Activated CD8-positive, alpha-beta T cell treated with anti-CD3 and anti-CD28 coated beads for 36 hours (primary cell): ENCODE measurements at regions of chr14 and their contacts with region 1.

Region 1: DNA sequence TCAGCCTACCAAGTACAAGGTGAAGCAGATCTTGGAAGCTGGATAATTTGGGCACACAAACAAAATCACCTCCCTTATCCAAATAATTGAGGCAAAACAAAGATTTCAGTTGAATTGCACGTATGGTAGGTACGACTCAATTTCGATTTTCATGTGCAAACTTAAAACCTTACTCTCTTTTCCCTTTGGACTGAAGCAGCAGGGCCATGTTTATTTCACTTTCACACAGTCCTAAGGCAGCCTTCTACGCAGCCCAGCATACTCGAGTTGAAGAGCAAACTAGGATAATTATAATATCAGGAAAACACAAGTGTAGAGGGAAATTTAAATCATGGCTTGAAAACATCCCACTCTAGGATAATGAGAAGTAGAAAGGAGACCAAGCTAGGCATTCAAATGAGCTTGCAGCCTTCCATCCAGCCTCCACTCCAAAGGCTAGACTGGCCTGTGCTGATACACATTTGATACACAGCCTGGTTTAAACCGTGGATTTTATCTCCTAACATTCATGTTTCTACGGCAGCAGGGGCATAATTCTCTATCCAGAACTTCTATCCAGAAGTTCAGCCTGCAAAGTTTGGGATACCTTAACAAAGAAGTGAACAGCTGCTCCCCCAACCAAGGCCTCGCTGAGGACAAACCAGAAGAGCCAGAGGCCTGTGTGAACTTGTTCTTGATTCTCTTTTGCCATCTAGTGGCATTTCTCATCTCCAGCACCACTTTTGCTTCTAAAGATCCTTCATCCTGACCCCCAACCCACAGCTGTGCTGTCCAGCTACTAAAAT is 2.4 kb upstream of the RNASE7 start:
- DNase-seq: peak; percentile 26
- ATAC-seq: peak; percentile 86
- H3K4me3 Mint-ChIP-seq: no peak overlapping the region
- H3K27ac Mint-ChIP-seq: no peak overlapping the region
- H3K4me1 Mint-ChIP-seq: peaks cover 4% of the 10 kb centered on the region
- H3K27me3 Mint-ChIP-seq: peaks cover 3% of the 10 kb centered on the region
- CTCF ChIP-seq: peak; percentile 50

Region 2: DNA sequence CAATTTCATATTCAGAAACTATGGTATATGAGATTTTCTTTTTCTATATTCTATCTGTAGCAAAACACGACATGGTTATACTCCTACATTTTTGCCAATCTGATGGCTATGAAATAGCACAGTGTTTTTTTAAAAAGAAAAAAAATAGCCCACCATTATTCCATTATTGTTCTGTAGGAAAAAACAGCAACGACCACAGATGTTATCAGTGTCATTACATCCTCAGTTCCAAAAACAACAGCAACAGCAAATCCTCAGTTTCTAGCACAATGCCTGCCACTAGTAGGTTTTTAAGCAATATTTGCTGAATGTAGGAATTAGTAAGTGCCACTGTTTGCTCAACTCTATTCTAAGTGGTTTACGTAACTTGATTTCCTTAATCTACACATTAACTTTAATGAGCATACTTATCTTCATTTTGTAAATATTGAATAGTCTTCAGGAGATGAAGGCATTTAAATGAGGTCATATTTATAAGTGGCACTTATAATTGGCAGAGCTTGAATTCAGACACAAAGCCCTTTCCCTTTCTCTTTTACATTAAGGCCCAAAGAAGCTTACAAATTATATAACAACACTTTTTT is 250.5 kb before region 1 on chr14:
- CTCF ChIA-PET with region 1: no interaction called
- POLR2A ChIA-PET with region 1: no interaction called
- intact Hi-C with region 1: no loop called
- DNase-seq: no peak
- ATAC-seq: no peak
- H3K4me3 Mint-ChIP-seq: no peak overlapping the region
- H3K27ac Mint-ChIP-seq: no peak overlapping the region
- H3K4me1 Mint-ChIP-seq: no peaks in the 10 kb centered on the region
- H3K27me3 Mint-ChIP-seq: no peaks in the 10 kb centered on the region
- CTCF ChIP-seq: no peak

Region 3: DNA sequence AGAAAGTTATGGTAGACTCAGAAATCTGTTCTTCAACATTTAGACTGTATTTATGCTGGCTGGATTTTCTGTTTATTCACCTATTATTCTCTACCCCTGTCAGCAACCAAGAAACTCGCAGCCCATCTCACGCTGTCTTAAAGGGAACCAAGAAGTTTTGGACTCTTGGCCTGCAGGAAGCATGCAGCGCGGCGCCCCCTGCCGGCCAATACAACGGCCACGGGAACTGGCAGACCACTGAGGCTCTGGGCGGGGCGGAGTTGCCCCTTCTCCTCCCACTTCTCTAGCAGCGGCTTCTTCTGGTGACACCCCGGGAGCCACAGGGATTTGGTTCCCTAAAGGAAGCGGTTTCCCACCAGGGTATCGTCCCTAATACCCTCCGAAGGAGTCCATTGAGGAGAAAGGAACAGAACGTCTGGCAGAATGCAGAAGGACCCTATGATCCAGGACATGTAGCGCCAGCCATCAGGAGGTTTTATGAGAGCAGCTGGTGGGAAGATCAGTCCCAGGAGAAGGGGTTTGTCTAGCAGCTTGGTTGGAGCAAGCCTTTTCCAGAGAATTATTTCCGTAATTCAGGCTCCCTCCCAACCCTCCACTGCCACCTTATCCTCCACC is 105.5 kb before region 1 on chr14:
- CTCF ChIA-PET with region 1: no interaction called
- POLR2A ChIA-PET with region 1: no interaction called
- intact Hi-C with region 1: no loop called
- DNase-seq: peak; percentile 65
- ATAC-seq: no peak
- H3K4me3 Mint-ChIP-seq: no peak overlapping the region
- H3K27ac Mint-ChIP-seq: no peak overlapping the region
- H3K4me1 Mint-ChIP-seq: no peaks in the 10 kb centered on the region
- H3K27me3 Mint-ChIP-seq: peaks cover 2% of the 10 kb centered on the region
- CTCF ChIP-seq: peak; percentile 76

Region 4: DNA sequence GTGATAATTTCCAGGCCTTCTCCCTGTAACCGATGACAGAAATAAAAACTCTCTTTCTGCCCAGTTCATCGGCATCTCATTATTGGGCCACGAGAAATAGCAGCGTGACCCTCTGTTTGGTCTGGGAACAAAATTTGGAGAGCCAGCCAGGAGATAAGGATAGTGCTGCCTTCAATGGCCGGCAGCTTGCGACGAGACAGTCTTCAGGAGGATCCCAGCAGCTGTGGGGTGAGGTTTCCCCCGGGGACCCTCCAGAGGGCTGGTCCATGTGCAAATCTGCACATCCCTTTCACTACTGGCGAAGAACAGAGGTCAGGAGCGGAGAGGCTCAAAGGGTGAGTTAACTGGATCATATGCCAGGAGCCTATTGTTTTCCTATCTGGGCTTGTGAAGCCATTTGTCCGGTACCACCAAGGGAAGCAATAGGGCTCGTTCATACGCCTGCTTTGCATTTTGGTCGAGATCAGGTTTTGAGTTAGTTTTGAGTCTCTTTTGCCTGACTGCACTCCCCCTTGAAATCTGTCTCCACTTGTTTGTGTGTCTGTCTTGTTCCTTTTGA is 35.9 kb before region 1 on chr14:
- CTCF ChIA-PET with region 1: interaction called, 15 read pairs
- POLR2A ChIA-PET with region 1: no interaction called
- intact Hi-C with region 1: no loop called
- DNase-seq: no peak
- ATAC-seq: no peak
- H3K4me3 Mint-ChIP-seq: no peak overlapping the region
- H3K27ac Mint-ChIP-seq: no peak overlapping the region
- H3K4me1 Mint-ChIP-seq: no peaks in the 10 kb centered on the region
- H3K27me3 Mint-ChIP-seq: no peaks in the 10 kb centered on the region
- CTCF ChIP-seq: no peak

Region 5: DNA sequence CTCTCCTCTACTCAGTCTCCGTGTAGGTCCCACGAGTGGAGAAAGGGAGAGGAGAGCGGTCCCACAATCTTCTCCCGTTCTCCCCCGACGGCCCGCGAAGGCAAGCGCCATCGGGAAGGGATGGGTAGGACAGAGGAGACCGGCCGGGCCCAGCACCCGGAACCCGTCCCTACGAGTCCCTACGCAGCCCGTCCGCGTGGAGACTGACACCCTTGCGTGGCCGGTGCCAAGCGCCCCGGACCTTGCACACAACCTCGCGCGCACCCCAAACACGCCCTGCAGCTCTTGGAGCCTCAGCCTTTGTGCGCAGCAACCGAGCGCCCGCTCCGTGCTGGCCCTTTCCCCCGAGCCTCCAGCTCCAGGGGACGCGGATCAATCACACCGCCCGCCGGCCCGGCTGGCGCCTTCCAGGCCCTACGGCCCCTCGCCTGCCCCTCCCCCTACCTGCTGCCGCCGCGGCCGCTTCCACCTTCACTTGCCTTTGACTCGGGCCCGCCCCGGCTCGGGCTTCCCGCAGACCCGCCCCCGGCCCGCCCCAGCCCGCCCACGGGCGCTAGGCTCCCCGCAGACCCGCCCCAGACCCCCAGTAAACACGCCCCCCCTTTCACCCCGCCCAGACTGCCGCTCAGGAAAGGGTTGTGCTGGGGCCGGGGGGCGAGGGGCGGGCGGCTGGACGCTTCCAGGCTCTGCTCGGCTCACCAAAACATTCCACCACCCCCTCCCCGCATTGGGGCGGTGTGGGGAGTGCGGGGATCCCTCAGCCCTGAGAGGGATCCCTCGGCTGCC is 15.0 kb before region 1 on chr14 and contains the start of gene NDRG2:
- CTCF ChIA-PET with region 1: interaction called, 218 read pairs
- POLR2A ChIA-PET with region 1: no interaction called
- intact Hi-C with region 1: no loop called
- DNase-seq: peak; percentile 73
- ATAC-seq: peak; percentile 77
- H3K4me3 Mint-ChIP-seq: peak within 1 kb of the TSS; percentile 78
- H3K27ac Mint-ChIP-seq: peak within 1 kb of the TSS; percentile 41
- H3K4me1 Mint-ChIP-seq: peaks cover 12% of the 10 kb centered on the region
- H3K27me3 Mint-ChIP-seq: peaks cover 2% of the 10 kb centered on the region
- CTCF ChIP-seq: no peak
- total RNA-seq, gene NDRG2: 4.3 to 5.3 TPM

Region 6: DNA sequence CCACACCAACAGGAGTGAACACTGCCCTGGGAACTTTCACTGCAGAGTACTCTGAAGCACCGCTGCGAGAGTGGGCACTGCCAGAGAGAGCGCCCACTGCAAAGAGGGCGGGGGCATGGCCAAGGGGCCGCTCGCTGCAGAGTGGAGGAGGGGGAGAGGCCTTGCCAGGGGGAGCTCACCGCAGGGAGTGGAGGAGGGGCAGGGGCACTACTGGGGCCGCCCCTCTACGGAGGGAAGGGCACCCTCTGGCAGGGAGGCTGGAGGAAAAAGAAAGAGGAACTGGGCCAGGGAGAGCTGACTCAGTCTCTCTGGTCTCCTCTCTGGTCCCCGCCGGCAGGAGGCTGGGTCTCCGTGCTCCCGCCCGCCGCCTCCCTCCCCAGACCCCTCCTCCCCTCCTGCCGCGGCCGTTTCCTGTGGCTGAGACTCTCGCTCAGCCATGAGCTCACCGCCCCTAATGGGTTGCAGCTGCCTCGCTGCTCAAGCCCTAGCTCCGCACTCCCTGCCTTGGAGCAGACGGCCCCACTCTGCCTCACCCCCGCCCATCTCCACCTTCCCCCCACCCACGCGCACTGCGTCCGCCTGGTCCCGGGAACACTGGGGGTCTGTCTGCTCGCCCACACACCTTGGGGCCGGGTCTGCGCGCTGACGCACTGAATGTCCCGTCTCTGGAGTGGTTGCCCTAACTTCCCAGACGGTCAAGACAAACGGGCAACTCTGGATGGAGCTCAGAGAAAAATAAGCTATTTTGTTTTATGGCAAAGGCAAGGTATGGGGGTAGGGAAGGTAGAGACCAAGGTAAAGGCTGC is 31.7 kb after region 1 on chr14:
- CTCF ChIA-PET with region 1: interaction called, 11 read pairs
- POLR2A ChIA-PET with region 1: no interaction called
- intact Hi-C with region 1: no loop called
- DNase-seq: peak; percentile 76
- ATAC-seq: peak; percentile 76
- H3K4me3 Mint-ChIP-seq: peak overlapping the region; percentile 69
- H3K27ac Mint-ChIP-seq: no peak overlapping the region
- H3K4me1 Mint-ChIP-seq: peaks cover 31% of the 10 kb centered on the region
- H3K27me3 Mint-ChIP-seq: peaks cover 56% of the 10 kb centered on the region
- CTCF ChIP-seq: no peak

Region 7: GRCh38 chr14:21098076-21098891 is 58.5 kb after region 1 on chr14 and contains the start of gene ZNF219:
- CTCF ChIA-PET with region 1: interaction called, 13 read pairs
- POLR2A ChIA-PET with region 1: interaction called, 3 read pairs
- intact Hi-C with region 1: no loop called
- DNase-seq: peak; percentile 34
- ATAC-seq: peak; percentile 37
- H3K4me3 Mint-ChIP-seq: peak within 1 kb of the TSS; percentile 80
- H3K27ac Mint-ChIP-seq: peak within 1 kb of the TSS; percentile 71
- H3K4me1 Mint-ChIP-seq: peaks cover 28% of the 10 kb centered on the region
- H3K27me3 Mint-ChIP-seq: no peaks in the 10 kb centered on the region
- CTCF ChIP-seq: no peak
- total RNA-seq, gene ZNF219: 7.2 to 8.2 TPM

Region 8: GRCh38 chr14:21191809-21192446 is 152.2 kb after region 1 on chr14:
- CTCF ChIA-PET with region 1: no interaction called
- POLR2A ChIA-PET with region 1: no interaction called
- intact Hi-C with region 1: no loop called
- DNase-seq: peak; percentile 85
- ATAC-seq: peak; percentile 98
- H3K4me3 Mint-ChIP-seq: peak overlapping the region; percentile 66
- H3K27ac Mint-ChIP-seq: peak overlapping the region; percentile 55
- H3K4me1 Mint-ChIP-seq: peaks cover 3% of the 10 kb centered on the region
- H3K27me3 Mint-ChIP-seq: no peaks in the 10 kb centered on the region
- CTCF ChIP-seq: no peak